Astrocyte of the cerebellum (primary cell): ENCODE measurements at regions of chr12 and their contacts with region 1.

Region 1: GRCh38 chr12:111451649-111452129 is 46.0 kb downstream of the SH2B3 start:
- DNase-seq: no peak
- H3K4me3 ChIP-seq: no peak overlapping the region
- CTCF ChIP-seq: peak; percentile 75

Region 2: GRCh38 chr12:111341426-111342065 is 110.1 kb before region 1 on chr12:
- in situ Hi-C with region 1: loop called (anchors 5 kb)
- DNase-seq: no peak
- H3K4me3 ChIP-seq: no peak overlapping the region
- CTCF ChIP-seq: no peak

Region 3: GRCh38 chr12:111396726-111397445 is 54.8 kb before region 1 on chr12:
- in situ Hi-C with region 1: loop called (anchors 10 kb)
- DNase-seq: peak; percentile 46
- H3K4me3 ChIP-seq: peak overlapping the region; percentile 29
- CTCF ChIP-seq: peak; percentile 98